ENCODE measurements at regions of chr11 and their contacts with region 1.

Region 1: DNA sequence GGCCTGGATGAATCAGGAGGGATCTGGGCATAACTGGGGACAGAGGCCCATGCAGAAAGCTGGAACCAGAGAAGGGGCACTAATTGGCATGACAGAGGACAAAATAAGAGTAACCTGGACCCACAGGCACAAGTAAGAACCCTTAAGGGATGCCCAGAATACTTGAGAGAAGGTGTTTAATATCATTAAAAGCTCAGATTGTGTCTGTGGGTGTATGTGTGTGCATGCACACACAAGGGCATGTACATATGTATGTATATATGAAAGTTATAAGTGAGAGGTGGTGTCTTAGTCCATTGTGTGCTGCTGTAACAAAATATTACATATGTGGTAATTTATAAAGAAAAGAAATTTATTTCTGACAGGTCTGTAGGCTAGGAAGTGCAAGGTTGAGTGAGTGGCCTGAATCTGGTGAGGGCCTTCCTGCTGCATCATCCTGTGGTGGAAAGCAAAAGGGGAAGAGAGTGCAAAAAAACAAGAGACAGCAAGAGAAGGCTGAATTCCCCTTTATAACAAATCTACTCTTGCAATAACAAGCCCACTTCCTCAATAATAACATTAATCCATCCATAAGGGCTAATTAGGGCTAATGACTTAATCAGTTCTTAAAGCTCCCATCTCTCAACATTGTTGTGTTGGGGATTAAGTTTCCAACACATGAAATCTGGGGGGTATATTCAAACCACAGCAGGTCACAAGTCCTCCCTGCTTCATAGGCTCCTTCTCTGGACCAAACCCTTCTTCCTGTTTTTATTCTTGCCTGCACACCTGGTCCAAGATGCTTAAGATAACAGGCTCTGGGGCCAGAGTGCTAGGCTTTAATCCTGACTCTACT is 68.3 kb upstream of the POU2AF2 start:
- DNase-seq: no peak
- H3K4me3 ChIP-seq: no peak overlapping the region
- H3K27ac ChIP-seq: no peak overlapping the region
- H3K4me1 ChIP-seq: no peaks in the 10 kb centered on the region
- H3K27me3 ChIP-seq: no peaks in the 10 kb centered on the region
- CTCF ChIP-seq: no peak

Region 2: DNA sequence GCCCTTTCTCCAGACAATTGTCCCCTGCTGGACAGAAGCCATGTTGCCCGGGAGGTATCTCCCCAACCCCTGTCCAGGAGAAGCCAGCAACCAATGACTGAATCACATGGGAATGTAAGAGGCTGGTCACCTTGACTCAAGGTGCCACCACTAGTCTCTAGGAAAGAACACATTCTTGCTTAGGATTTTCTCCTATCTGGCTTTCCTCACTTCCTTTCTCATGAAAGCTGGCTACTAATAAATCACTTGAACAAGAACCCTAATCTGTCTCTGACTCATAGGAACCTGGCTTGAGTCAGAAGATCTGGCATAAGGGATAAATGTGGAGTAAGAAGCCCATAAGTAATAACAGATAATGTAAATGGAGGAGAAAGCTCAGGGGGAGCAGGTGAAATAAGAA is 1856.7 kb before region 1 on chr11:
- intact Hi-C with region 1: loop called (anchors 10 kb)
- DNase-seq: no peak
- H3K4me3 ChIP-seq: no peak overlapping the region
- H3K27ac ChIP-seq: no peak overlapping the region
- H3K4me1 ChIP-seq: no peaks in the 10 kb centered on the region
- H3K27me3 ChIP-seq: no peaks in the 10 kb centered on the region
- CTCF ChIP-seq: no peak

Region 3: GRCh38 chr11:111123463-111124398 is 53.5 kb before region 1 on chr11:
- intact Hi-C with region 1: no loop called
- DNase-seq: no peak
- H3K4me3 ChIP-seq: no peak overlapping the region
- H3K27ac ChIP-seq: no peak overlapping the region
- H3K4me1 ChIP-seq: no peaks in the 10 kb centered on the region
- H3K27me3 ChIP-seq: no peaks in the 10 kb centered on the region
- CTCF ChIP-seq: no peak

Measured in tibial artery (tissue), 4 donors.